Esophagus muscularis mucosa (tissue), 4 donors: ENCODE measurements at regions of chr7 and their contacts with region 1.

Region 1: GRCh38 chr7:25894902-25895791 is 256.9 kb upstream of the NFE2L3 start:
- DNase-seq: peak; percentile 93
- H3K4me3 ChIP-seq: peak overlapping the region; percentile 20 to 44 (median 26)
- H3K27ac ChIP-seq: no peak overlapping the region
- H3K4me1 ChIP-seq: peaks cover 5 to 19% (median 13%) of the 10 kb centered on the region in 4 donors
- H3K27me3 ChIP-seq: peaks cover 0 to 29% (median 0%) of the 10 kb centered on the region in 4 donors
- CTCF ChIP-seq: peak; percentile 58 to 75 (median 60)
- EP300 ChIP-seq: no peak
- POLR2A ChIP-seq: no peak

Region 2: DNA sequence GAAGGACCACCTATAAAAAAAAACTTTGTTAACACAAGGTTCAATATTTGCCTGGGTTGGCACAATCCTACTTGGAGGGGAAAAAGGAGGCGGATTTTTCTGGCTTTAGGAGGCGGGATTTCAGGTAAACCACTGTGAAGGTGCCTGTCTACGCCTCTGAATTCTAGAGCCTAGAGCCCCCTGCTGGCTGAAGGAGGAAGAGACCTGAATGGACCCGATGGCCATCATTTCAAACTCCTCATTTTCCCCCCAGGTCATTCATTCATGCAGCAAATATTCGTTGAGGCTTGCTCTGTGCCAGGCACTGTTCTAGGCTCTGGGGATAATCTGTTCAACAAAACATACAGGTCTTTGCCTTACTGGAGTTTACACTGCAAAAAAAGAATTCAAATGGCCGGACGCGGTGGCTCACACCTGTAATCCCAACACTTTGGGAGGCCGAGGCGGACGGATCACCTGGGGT is 166.6 kb after region 1 on chr7:
- intact Hi-C with region 1: loop called (anchors 2 kb)
- DNase-seq: no peak
- H3K4me3 ChIP-seq: no peak overlapping the region
- H3K27ac ChIP-seq: no peak overlapping the region
- H3K4me1 ChIP-seq: peaks cover 0 to 8% (median 0%) of the 10 kb centered on the region in 4 donors
- H3K27me3 ChIP-seq: peaks cover 0 to 36% (median 0%) of the 10 kb centered on the region in 4 donors
- CTCF ChIP-seq: peak; percentile 60 to 83 (median 72)
- EP300 ChIP-seq: no peak
- POLR2A ChIP-seq: no peak

Region 3: GRCh38 chr7:27150568-27151340 is 1255.6 kb after region 1 on chr7:
- intact Hi-C with region 1: loop called (anchors 10 kb)
- DNase-seq: no peak
- H3K4me3 ChIP-seq: peak overlapping the region; percentile 41 to 58 (median 44)
- H3K27ac ChIP-seq: peak overlapping the region in 3 of 4 donors; percentile 1 to 21 (median 10)
- H3K4me1 ChIP-seq: peaks cover 45 to 57% (median 53%) of the 10 kb centered on the region in 4 donors
- H3K27me3 ChIP-seq: peaks cover 28 to 91% (median 52%) of the 10 kb centered on the region in 4 donors
- CTCF ChIP-seq: peak; percentile 77 to 93 (median 80)
- EP300 ChIP-seq: no peak
- POLR2A ChIP-seq: no peak

Region 4: DNA sequence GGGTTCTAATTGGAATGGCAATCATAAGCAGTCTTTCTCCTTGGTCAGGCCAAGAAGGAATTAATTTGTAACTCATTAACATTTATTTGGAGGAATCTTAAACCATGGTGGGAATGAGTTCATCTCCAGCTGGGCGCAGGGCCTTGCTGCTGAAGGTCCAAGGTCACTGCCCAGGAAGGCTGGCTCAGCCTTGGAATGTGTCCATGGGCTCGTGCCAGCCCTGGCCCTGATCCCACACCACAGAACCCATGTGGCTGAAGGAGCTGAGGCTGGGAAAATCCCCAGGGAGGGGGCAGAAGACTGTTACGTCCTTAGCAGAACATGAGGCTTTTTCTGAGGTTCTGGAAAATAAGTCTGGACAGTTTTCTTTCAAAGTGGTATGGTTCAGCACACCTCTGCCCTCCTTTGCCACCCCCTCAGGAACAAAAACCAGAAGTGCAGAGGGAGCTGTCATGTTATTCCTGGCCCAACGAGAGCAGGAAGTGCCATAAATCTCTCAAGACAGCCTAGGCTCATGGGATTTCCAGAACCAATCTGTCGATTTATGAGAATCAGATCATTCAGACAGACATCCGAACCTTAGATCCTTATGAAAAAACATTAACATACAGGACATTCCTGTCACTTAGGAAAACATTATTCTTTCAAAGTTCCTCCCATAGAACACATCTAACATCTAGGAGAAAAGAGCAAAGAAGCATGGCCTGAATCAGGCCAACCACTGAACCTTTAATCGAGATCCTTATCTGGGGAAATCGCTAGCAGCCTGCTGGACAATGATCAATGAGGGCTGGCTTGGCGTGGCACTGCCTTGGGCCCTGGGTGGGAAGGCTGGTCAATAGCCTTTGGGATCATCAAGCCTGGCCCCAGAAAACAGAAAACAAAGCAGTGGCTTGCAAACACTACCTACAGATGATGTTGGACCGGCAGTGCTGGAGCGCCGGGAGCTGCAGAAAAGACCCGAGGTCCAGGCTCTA is 1979.1 kb after region 1 on chr7:
- intact Hi-C with region 1: no loop called
- DNase-seq: no peak
- H3K4me3 ChIP-seq: no peak overlapping the region
- H3K27ac ChIP-seq: no peak overlapping the region
- H3K4me1 ChIP-seq: peaks cover 15 to 32% (median 22%) of the 10 kb centered on the region in 4 donors
- H3K27me3 ChIP-seq: no peaks in the 10 kb centered on the region
- CTCF ChIP-seq: no peak
- EP300 ChIP-seq: no peak
- POLR2A ChIP-seq: no peak